K562 (cell line): ENCODE measurements at regions of chr1 and their contacts with region 1.

Region 1: GRCh38 chr1:6343506-6344405 is 49.8 kb downstream of the ACOT7 start:
- DNase-seq: peak; percentile 77 to 83 (median 80)
- ATAC-seq: peak; percentile 94
- H3K4me3 ChIP-seq: no peak overlapping the region
- H3K27ac ChIP-seq: no peak overlapping the region
- H3K4me1 ChIP-seq: no peaks in the 10 kb centered on the region
- H3K27me3 ChIP-seq: no peaks in the 10 kb centered on the region
- CTCF ChIP-seq: peak; percentile 95 to 99 (median 98)
- EP300 ChIP-seq: no peak
- POLR2A ChIP-seq: no peak
- RAD21 ChIP-seq: peak; percentile 98

Region 2: GRCh38 chr1:5667513-5668325 is 676.0 kb before region 1 on chr1:
- CTCF ChIA-PET with region 1: no interaction called
- POLR2A ChIA-PET with region 1: no interaction called
- in situ Hi-C with region 1: no loop called
- intact Hi-C with region 1: no loop called
- DNase-seq: no peak
- ATAC-seq: no peak
- H3K4me3 ChIP-seq: no peak overlapping the region
- H3K27ac ChIP-seq: no peak overlapping the region
- H3K4me1 ChIP-seq: peaks cover 0 to 5% of the 10 kb centered on the region in 2 experiments; a peak in 1 of 5 replicates
- H3K27me3 ChIP-seq: peaks cover 0 to 5% of the 10 kb centered on the region in 2 experiments; a peak in 2 of 5 replicates
- CTCF ChIP-seq: no peak
- EP300 ChIP-seq: no peak
- POLR2A ChIP-seq: no peak
- RAD21 ChIP-seq: no peak

Region 3: GRCh38 chr1:6052543-6053205 is 291.1 kb before region 1 on chr1:
- CTCF ChIA-PET with region 1: no interaction called
- POLR2A ChIA-PET with region 1: no interaction called
- in situ Hi-C with region 1: no loop called
- intact Hi-C with region 1: loop called (anchors 5 kb)
- DNase-seq: peak; percentile 70 to 83 (median 75)
- ATAC-seq: peak; percentile 86
- H3K4me3 ChIP-seq: no peak overlapping the region
- H3K27ac ChIP-seq: no peak overlapping the region
- H3K4me1 ChIP-seq: peaks cover 0 to under 1% of the 10 kb centered on the region in 2 experiments; a peak in 1 of 5 replicates
- H3K27me3 ChIP-seq: peaks cover 9 to 29% of the 10 kb centered on the region in 2 experiments; a peak in 4 of 5 replicates
- CTCF ChIP-seq: peak; percentile 72 to 84 (median 72)
- EP300 ChIP-seq: no peak
- POLR2A ChIP-seq: no peak
- RAD21 ChIP-seq: peak in 1 of 2 experiments; percentile 85; a peak in 3 of 4 replicates

Region 4: DNA sequence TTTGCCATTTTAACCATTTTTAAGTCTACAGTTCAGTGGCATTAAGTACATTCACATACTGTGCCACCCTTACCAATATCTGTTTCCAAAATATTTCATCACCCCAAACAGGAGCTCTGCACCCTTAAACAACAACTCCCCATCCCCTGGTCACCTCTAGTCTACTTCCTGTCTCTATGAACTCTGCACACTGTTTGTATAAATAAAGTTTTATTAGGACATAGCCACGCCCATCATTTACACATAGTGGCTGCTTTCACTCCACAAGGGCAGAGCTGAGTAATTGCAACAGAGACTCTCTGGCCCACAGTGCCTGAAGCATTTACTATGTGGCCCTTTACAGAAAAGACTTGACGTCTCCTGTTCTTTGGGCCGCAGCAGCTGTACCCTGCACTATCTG is 268.0 kb before region 1 on chr1:
- CTCF ChIA-PET with region 1: no interaction called
- POLR2A ChIA-PET with region 1: no interaction called
- in situ Hi-C with region 1: no loop called
- intact Hi-C with region 1: no loop called
- DNase-seq: peak; percentile 48 to 55 (median 52)
- ATAC-seq: peak; percentile 74
- H3K4me3 ChIP-seq: no peak overlapping the region
- H3K27ac ChIP-seq: no peak overlapping the region
- H3K4me1 ChIP-seq: peaks cover 2 to 33% of the 10 kb centered on the region in 2 experiments; a peak in 4 of 5 replicates
- H3K27me3 ChIP-seq: peaks cover 41 to 65% of the 10 kb centered on the region in 2 experiments
- CTCF ChIP-seq: no peak
- EP300 ChIP-seq: no peak
- POLR2A ChIP-seq: no peak
- RAD21 ChIP-seq: no peak

Region 5: GRCh38 chr1:6251233-6251632 is 92.5 kb before region 1 on chr1:
- CTCF ChIA-PET with region 1: interaction called, 131 read pairs
- POLR2A ChIA-PET with region 1: no interaction called
- in situ Hi-C with region 1: loop called (anchors 5 kb)
- intact Hi-C with region 1: loop called (anchors 1 kb)
- DNase-seq: no peak
- ATAC-seq: no peak
- H3K4me3 ChIP-seq: no peak overlapping the region
- H3K27ac ChIP-seq: no peak overlapping the region
- H3K4me1 ChIP-seq: peaks cover 1 to 51% of the 10 kb centered on the region in 2 experiments; a peak in 2 of 5 replicates
- H3K27me3 ChIP-seq: peaks cover 17 to 62% of the 10 kb centered on the region in 2 experiments; a peak in 4 of 5 replicates
- CTCF ChIP-seq: no peak
- EP300 ChIP-seq: no peak
- POLR2A ChIP-seq: no peak
- RAD21 ChIP-seq: no peak

Region 6: DNA sequence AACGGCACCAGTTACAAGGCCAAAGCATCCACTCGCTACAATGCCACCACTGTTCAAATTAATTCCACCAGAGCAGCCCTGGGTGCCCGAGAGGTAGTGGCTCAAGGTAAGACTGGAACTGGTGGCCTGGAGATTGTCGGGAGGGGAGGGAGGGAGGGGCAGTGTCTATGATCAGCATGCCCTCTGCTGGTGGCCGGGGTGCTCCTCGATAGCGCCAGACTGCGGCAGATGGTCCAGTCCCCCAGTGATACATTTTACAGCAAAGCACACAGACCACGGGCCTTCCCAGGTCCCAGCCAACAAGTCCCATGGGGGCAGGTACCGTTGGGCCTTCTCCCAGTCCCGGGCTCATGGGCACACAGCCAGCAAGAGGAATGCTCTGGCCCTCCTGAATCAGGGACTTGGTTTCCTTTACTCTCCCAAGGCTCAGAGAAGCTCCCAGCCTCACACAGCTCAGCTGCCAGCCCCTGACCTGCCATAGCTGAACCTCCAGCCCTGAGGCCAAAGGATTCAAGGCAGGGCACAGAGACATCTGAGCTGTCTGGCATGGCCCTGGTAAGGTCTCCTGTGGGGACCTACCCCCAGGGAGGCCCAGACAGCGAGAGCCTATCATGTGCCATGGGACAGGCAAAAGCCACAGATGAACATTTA is 34.5 kb after region 1 on chr1:
- CTCF ChIA-PET with region 1: no interaction called
- POLR2A ChIA-PET with region 1: interaction called, 4 read pairs
- in situ Hi-C with region 1: no loop called
- intact Hi-C with region 1: loop called (anchors 1 kb)
- DNase-seq: peak; percentile 61 to 76 (median 71)
- ATAC-seq: peak; percentile 98
- H3K4me3 ChIP-seq: no peak overlapping the region
- H3K27ac ChIP-seq: no peak overlapping the region
- H3K4me1 ChIP-seq: peaks cover 0 to 13% of the 10 kb centered on the region in 2 experiments; a peak in 2 of 5 replicates
- H3K27me3 ChIP-seq: no peaks in the 10 kb centered on the region
- CTCF ChIP-seq: peak; percentile 66 to 86 (median 79)
- EP300 ChIP-seq: no peak
- POLR2A ChIP-seq: no peak
- RAD21 ChIP-seq: peak in 1 of 2 experiments; percentile 55; a peak in 2 of 4 replicates

Region 7: GRCh38 chr1:6438047-6438525 is 94.3 kb after region 1 on chr1:
- CTCF ChIA-PET with region 1: interaction called, 19 read pairs
- POLR2A ChIA-PET with region 1: no interaction called
- in situ Hi-C with region 1: no loop called
- intact Hi-C with region 1: loop called (anchors 1 kb)
- DNase-seq: peak; percentile 79 to 90 (median 86)
- ATAC-seq: peak; percentile 79
- H3K4me3 ChIP-seq: no peak overlapping the region
- H3K27ac ChIP-seq: no peak overlapping the region
- H3K4me1 ChIP-seq: peaks cover 0 to 20% of the 10 kb centered on the region in 2 experiments; a peak in 2 of 5 replicates
- H3K27me3 ChIP-seq: peaks cover 6 to 51% of the 10 kb centered on the region in 2 experiments; a peak in 4 of 5 replicates
- CTCF ChIP-seq: peak; percentile 96 to 98 (median 96)
- EP300 ChIP-seq: no peak
- POLR2A ChIP-seq: no peak
- RAD21 ChIP-seq: peak; percentile 50 to 90